ENCODE measurements at regions of chr20 and their contacts with region 1.

Region 1: GRCh38 chr20:51480507-51481270 is 61.8 kb downstream of the NFATC2 start:
- DNase-seq: peak; percentile 84
- H3K4me3 Mint-ChIP-seq: peak overlapping the region; percentile 82
- H3K27ac Mint-ChIP-seq: peak overlapping the region; percentile 96
- H3K4me1 Mint-ChIP-seq: peaks cover 81% of the 10 kb centered on the region
- H3K27me3 Mint-ChIP-seq: no peaks in the 10 kb centered on the region

Region 2: GRCh38 chr20:51059862-51060261 is 420.8 kb before region 1 on chr20:
- intact Hi-C with region 1: loop called (anchors 5 kb)
- DNase-seq: no peak
- H3K4me3 Mint-ChIP-seq: no peak overlapping the region
- H3K27ac Mint-ChIP-seq: no peak overlapping the region
- H3K4me1 Mint-ChIP-seq: peaks cover 29% of the 10 kb centered on the region
- H3K27me3 Mint-ChIP-seq: peaks cover 6% of the 10 kb centered on the region

Region 3: GRCh38 chr20:51404298-51405060 is 76.2 kb before region 1 on chr20:
- intact Hi-C with region 1: loop called (anchors 1 kb)
- DNase-seq: peak; percentile 94
- H3K4me3 Mint-ChIP-seq: peak overlapping the region; percentile 75
- H3K27ac Mint-ChIP-seq: peak overlapping the region; percentile 97
- H3K4me1 Mint-ChIP-seq: peaks cover 81% of the 10 kb centered on the region
- H3K27me3 Mint-ChIP-seq: no peaks in the 10 kb centered on the region

Region 4: DNA sequence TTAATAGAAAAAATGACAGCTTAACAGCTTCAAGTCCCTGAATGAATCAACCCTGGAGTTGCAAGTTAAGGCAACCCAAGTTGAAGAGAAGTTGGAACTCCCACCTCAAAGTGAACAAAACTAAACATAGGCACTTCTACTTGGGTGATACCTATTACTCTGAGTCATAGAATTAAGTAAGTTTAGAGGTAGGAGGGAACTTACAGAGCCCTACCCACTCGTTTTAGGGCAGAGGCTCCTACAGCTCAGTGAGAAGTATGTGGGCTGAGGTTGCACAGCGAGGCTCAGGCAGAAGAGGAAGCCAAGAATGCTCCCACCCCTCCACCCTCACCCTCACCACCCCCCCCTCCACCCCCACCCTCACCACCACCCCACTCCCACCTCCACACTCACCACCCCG is 19.6 kb after region 1 on chr20:
- intact Hi-C with region 1: loop called (anchors 1 kb)
- DNase-seq: peak; percentile 85
- H3K4me3 Mint-ChIP-seq: peak overlapping the region; percentile 27
- H3K27ac Mint-ChIP-seq: peak overlapping the region; percentile 85
- H3K4me1 Mint-ChIP-seq: peaks cover 72% of the 10 kb centered on the region
- H3K27me3 Mint-ChIP-seq: no peaks in the 10 kb centered on the region

Region 5: DNA sequence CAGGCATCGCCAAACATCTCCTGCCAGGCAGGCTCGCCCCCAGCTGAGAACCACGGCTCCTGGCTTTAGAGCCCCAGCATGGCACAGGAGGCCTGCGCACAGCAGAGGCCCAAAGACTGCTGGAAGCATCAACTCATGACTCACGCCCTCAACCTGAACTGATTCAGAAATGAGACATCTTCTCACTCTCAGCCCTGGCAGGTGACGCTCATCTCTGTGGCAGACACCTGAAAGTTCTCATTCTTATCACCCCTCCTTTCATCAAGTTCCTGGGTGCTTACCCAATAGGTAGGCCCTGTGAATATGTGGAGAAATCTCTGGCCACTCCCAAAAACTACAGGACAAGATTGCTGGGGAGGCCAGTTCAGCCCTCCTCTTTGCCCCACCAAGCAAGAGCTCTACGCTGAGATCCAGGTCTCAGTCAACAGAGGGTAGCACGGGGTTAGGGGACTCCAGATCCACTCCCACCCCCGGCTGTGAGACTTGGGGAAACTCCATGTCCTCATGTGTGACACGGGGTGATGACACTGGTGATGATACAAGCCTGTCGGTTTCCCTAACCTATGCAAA is 50.5 kb after region 1 on chr20:
- intact Hi-C with region 1: loop called (anchors 1 kb)
- DNase-seq: peak; percentile 84
- H3K4me3 Mint-ChIP-seq: peak overlapping the region; percentile 74
- H3K27ac Mint-ChIP-seq: peak overlapping the region; percentile 98
- H3K4me1 Mint-ChIP-seq: peaks cover 76% of the 10 kb centered on the region
- H3K27me3 Mint-ChIP-seq: no peaks in the 10 kb centered on the region